Activated CD4-positive, alpha-beta T cell treated with anti-CD3 and anti-CD28 coated beads, Interleukin-2, amount 10 ng/mL, durations not matched to agents 24 days and 14 days (primary cell): ENCODE measurements at regions of chr7 and their contacts with region 1.

Region 1: DNA sequence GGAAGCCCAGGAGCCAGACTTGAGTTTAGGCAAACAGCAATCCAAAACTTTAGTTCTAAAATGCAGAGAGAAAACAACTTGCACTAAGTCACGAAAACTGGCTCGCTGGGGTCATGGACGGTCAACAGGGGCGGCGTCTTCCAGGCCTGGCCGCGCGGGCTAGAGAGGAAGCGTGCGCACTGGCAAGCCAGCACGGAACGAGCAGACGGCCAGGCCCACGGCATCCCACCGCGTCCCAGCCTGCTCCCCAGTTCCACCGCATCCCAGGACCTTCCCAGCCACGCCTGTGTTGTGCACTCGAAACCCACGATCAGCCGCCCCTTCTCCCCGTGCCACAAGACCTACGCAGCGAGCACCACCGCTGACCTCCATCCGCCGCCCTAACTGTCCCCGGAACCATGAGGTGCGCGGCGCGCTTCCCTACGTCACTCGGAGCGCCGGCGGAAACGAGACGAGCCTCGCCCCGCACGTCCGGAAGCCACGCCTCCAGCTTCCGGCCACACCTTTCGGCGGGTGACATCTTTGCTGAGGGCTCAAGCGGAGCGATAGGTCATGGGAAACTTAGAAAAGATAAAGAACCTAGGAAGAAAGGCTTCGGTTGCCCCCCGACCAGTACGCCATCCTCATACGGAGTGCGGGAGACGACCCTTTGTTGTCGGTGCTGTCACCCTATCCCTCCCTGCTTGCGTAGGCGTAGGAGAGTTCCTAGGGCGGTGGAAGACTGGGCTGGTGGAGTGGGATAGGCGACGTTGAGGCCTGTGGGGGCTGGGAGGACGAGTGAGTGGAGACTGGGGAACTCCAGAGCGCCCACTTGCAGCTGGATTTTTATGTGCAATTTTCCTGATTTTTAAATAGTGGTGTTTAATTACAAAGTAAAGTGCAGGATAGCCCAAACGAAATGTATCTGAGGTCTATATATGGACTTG is at the start of gene TBRG4:
- DNase-seq: peak; percentile 99
- H3K4me3 Mint-ChIP-seq: peak within 1 kb of the TSS; percentile 98
- H3K27ac Mint-ChIP-seq: peak within 1 kb of the TSS; percentile 99
- H3K4me1 Mint-ChIP-seq: peaks cover 35% of the 10 kb centered on the region
- H3K27me3 Mint-ChIP-seq: peaks cover 21% of the 10 kb centered on the region
- total RNA-seq, gene TBRG4: 192 and 198 TPM in 2 replicates

Region 2: DNA sequence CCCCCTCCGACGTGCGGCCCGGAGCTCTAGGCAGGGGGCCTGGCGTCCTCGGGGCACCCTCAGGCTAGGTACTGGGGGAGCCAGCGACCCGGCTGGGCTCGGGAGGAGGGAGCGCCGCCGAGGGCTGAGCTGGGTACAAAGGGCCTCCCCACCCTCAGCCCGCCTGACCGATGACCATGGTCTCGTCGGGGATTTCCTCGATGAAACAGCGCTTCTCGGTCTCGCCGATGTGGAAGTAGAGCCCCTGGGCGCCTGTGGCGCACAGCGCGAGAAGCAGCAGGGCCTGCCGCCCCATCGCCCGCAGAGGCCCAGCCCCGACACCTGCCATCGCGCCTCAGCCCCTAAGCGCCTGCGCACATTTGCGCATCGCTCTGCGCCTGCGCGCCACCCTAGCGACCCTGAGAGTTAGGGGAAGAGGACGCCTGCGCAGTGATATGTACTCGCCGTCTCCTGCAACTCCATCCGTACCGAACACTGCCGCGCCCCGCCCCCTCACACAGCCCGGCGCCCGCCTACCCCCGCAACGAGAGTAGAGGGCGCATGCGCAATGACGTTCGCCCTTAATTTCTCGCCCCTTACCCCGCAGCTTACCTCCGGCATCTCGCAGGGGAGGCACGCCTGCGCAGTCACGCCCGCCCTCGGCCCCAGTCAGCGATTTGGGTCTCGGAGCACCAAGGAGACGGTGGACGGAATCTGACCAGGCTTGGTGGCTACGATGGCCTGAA is 529.5 kb before region 1 on chr7 and contains the start of gene TMED4:
- intact Hi-C with region 1: loop called (anchors 2 kb)
- DNase-seq: peak; percentile 100
- H3K4me3 Mint-ChIP-seq: peak within 1 kb of the TSS; percentile 92
- H3K27ac Mint-ChIP-seq: peak within 1 kb of the TSS; percentile 92
- H3K4me1 Mint-ChIP-seq: peaks cover 35% of the 10 kb centered on the region
- H3K27me3 Mint-ChIP-seq: peaks cover 4% of the 10 kb centered on the region
- total RNA-seq, gene TMED4: 78.4 and 80.2 TPM in 2 replicates

Region 3: DNA sequence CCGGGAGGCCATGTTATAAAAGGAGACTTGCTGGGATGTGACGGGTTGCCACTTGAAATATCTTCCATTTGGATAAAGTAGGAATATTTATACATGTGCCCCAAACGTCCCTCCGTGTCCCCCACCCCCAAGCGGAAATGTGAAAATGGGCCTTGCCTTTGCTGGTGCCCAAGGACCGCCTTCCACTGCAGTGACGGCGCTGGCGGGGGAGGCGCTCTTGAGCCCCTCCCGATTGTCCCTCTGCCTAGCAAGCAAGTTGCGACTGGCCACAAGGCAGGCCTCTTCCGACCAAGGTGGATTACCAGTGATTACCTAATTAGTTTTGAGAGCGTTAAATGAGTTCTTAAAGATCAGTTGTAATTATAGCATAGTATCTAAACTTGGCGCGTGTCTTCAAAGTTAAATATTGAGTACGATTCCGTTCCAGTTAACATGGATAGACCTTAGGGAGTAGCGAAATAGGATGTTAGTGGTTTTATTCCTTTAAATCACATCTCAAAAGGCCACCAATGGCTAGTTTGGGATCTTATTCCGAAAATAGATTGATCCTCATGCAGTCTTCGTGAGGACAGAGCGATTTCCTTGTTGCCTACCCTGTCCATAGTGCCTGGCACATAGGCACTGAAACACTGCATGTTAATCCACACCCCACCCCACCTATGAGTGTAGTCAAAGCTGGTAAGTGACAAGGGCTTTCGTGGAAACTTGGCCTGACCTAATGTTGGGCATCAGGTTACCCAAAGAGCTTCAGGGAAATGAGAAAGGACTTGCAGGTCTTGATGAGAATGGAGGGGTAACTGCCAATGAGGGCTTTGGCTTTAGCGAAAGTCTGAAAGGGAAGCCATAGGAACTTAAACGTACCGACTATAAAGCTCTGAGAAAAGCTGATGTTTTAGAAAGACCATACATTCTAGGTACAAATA is 314.0 kb before region 1 on chr7:
- intact Hi-C with region 1: loop called (anchors 2 kb)
- DNase-seq: peak; percentile 95
- H3K4me3 Mint-ChIP-seq: peak overlapping the region; percentile 98
- H3K27ac Mint-ChIP-seq: peak overlapping the region; percentile 97
- H3K4me1 Mint-ChIP-seq: peaks cover 31% of the 10 kb centered on the region
- H3K27me3 Mint-ChIP-seq: no peaks in the 10 kb centered on the region

Region 4: GRCh38 chr7:44838751-44839150 is 272.8 kb before region 1 on chr7:
- intact Hi-C with region 1: no loop called
- DNase-seq: no peak
- H3K4me3 Mint-ChIP-seq: no peak overlapping the region
- H3K27ac Mint-ChIP-seq: no peak overlapping the region
- H3K4me1 Mint-ChIP-seq: peaks cover 23% of the 10 kb centered on the region
- H3K27me3 Mint-ChIP-seq: no peaks in the 10 kb centered on the region

Region 5: GRCh38 chr7:44980393-44981034 is 131.0 kb before region 1 on chr7:
- intact Hi-C with region 1: loop called (anchors 1 kb)
- DNase-seq: peak; percentile 89
- H3K4me3 Mint-ChIP-seq: peak overlapping the region; percentile 93
- H3K27ac Mint-ChIP-seq: peak overlapping the region; percentile 90
- H3K4me1 Mint-ChIP-seq: peaks cover 63% of the 10 kb centered on the region
- H3K27me3 Mint-ChIP-seq: no peaks in the 10 kb centered on the region

Region 6: DNA sequence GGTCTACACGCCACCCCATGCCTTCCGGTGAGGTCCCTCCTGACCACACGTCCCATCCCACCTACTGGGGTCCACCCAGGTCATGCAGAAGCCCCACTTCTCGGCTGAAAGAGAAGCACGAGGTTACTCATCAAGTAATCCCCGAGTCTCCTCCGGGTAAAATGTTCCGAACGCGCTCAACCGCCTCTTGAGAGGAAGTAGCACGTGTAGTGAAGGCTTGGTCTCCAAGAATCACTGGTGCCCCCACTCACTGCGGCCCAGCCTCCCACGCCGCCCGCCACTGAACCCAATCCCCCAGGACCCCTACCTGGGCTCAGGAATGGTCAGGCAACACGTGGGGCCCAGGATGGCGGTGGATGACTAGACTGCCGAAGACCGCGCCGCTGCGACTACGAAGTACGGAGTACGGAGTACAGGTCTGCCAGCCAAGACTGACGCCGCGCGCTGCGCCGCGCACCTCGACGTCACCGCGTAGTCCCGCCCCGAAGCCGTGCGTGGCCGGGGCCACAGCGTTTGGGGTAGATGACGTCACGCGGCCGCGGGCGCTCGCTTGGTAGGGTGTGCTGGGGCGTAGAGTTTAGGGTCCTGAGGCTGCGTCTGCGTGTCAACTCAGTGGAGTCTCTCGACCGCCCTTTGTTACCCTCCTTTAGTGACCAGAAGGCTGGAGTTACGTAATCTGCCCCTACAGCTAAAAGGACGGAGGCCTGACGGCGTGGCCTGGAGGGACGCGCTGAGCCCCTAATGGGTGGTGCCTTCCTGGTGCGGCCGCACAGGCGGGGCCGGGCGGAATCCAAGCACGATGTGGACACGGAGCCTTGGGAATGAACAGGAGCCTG is 125.1 kb before region 1 on chr7:
- intact Hi-C with region 1: loop called (anchors 1 kb)
- DNase-seq: peak; percentile 99
- H3K4me3 Mint-ChIP-seq: peak overlapping the region; percentile 99
- H3K27ac Mint-ChIP-seq: peak overlapping the region; percentile 99
- H3K4me1 Mint-ChIP-seq: peaks cover 55% of the 10 kb centered on the region
- H3K27me3 Mint-ChIP-seq: no peaks in the 10 kb centered on the region

Region 7: DNA sequence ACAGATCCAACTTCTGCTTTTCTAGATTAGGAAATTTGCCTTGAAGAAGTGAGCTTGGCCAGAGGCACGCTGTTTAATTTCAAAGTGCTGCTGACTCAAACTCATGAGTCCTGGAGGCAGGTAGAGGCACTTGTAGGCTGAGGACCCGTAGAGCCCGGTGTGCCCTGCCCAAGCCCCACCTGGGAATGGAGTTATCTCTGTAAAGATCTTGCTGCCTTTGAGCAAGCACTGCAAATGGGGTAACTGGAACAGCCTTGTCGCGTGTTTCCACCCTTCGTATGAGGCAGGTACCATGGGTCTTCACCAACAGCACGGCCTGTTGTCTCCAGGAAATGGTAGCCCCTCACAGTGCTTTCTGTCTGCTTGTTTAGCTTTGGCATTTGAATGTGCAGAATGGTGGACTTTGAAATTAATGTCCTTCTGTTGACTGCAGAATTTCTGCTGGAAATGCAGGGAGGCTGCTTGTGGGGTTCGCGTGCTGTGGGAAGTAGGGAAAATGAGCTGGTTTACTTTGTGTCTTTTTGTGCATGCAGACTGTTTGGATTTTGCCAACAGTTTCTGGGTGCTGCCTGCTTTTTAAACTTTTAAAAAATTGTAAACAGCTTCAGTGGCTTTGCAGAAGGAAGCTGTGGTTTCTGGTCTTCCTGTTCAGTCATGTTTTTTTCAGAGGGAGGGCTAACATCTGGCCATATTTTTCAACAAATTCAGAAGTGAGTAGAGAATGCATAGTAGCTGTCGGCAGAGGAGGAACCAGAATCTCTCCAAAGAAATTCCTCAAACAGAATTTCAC is 84.4 kb before region 1 on chr7:
- intact Hi-C with region 1: loop called (anchors 2 kb)
- DNase-seq: peak; percentile 84
- H3K4me3 Mint-ChIP-seq: peak overlapping the region; percentile 85
- H3K27ac Mint-ChIP-seq: peak overlapping the region; percentile 85
- H3K4me1 Mint-ChIP-seq: peaks cover 68% of the 10 kb centered on the region
- H3K27me3 Mint-ChIP-seq: no peaks in the 10 kb centered on the region

Region 8: DNA sequence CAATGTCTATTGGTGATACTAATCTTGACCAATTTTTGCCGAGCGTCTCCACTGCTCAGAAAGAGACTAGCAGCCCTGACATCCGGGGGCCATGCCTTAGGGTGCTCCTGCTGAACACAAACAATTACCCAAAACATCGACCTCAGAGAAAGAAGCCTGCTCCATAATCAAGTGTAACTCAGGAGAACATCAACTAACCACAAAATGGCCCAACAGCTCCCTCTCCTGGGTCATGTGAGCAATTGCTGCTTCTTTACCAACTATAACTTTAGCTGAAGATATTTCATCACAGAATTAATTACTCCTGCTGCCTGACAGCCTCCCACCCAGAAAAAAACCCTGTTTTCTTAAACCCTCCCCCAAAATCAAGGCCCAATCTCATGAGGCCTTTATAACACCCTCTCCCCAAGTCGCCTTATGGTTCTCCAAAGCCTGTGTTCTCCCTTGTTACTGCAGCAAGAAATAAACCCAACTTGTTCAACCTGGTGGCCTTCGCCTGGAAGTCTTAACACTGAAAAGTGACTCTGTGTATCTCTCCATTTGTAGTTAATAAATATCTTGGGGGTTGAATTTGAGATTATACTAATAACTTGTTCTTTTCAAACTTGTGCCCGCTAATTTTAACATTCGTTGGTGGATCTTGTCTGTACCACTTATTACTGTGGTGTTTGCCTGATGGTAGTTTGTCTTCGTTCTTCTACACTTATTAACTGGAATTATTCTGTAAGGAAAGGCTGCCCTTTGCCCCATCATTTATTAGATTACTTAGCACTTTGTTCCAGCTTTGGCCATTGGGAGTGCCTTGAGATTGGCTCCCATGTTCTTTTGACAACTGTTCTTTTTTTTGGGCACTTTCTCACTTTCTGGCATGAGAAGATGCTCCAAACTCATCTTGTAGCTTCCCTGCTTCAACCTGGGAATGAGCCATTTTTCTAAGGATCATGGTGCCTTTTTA is 24.8 kb after region 1 on chr7:
- intact Hi-C with region 1: loop called (anchors 2 kb)
- DNase-seq: peak; percentile 91
- H3K4me3 Mint-ChIP-seq: no peak overlapping the region
- H3K27ac Mint-ChIP-seq: no peak overlapping the region
- H3K4me1 Mint-ChIP-seq: peaks cover 16% of the 10 kb centered on the region
- H3K27me3 Mint-ChIP-seq: peaks cover 2% of the 10 kb centered on the region